ENCODE measurements at regions of chr2 and their contacts with region 1.

Region 1: GRCh38 chr2:26959331-26959730 is 11.1 kb upstream of the MAPRE3 start:
- DNase-seq: no peak
- H3K4me3 ChIP-seq: no peak overlapping the region
- H3K27ac ChIP-seq: no peak overlapping the region
- H3K4me1 ChIP-seq: no peaks in the 10 kb centered on the region
- H3K27me3 ChIP-seq: peaks cover 19 to 33% of the 10 kb centered on the region in 2 experiments
- CTCF ChIP-seq: no peak
- POLR2A ChIP-seq: no peak

Region 2: GRCh38 chr2:26982102-26982742 is 22.9 kb after region 1 on chr2:
- CTCF ChIA-PET with region 1: interaction called, 16 read pairs
- POLR2A ChIA-PET with region 1: no interaction called
- dilution Hi-C with region 1: no loop called
- intact Hi-C with region 1: no loop called
- DNase-seq: peak; percentile 72
- H3K4me3 ChIP-seq: no peak overlapping the region
- H3K27ac ChIP-seq: no peak overlapping the region
- H3K4me1 ChIP-seq: no peaks in the 10 kb centered on the region
- H3K27me3 ChIP-seq: peaks cover 6 to 7% of the 10 kb centered on the region in 2 experiments
- CTCF ChIP-seq: peak; percentile 21 to 50
- POLR2A ChIP-seq: no peak

Region 3: DNA sequence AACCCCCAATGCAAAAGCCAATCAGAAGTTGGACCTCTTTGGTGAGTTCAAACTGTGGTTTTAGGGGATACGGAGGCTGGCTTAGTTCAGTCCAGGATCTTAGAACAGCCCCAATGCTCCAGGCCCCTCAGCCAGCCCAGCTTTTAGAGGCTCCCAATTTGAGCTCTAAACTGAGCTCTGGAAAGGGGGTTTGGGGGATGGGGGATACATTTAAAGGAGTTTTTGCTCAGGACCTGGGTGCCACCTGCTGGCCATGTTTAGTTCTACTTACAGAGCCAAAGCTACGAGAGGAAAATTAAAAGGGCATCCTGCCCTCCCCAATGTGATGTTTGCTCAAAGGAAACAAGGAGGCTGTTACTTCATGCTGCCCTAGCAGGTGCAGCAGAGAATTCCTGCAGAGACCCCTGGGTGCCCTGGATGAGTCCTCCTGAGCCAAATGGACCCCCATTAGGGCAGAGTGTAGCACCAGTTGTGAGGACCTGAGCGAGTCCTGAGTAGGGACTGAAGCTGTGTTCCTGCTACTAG is 57.5 kb after region 1 on chr2:
- CTCF ChIA-PET with region 1: interaction called, 355 read pairs
- POLR2A ChIA-PET with region 1: no interaction called
- dilution Hi-C with region 1: no loop called
- intact Hi-C with region 1: loop called (anchors 1 kb)
- DNase-seq: peak; percentile 63
- H3K4me3 ChIP-seq: no peak overlapping the region
- H3K27ac ChIP-seq: no peak overlapping the region
- H3K4me1 ChIP-seq: peaks cover 13% of the 10 kb centered on the region
- H3K27me3 ChIP-seq: no peaks in the 10 kb centered on the region
- CTCF ChIP-seq: peak; percentile 68 to 70
- POLR2A ChIP-seq: no peak

Region 4: DNA sequence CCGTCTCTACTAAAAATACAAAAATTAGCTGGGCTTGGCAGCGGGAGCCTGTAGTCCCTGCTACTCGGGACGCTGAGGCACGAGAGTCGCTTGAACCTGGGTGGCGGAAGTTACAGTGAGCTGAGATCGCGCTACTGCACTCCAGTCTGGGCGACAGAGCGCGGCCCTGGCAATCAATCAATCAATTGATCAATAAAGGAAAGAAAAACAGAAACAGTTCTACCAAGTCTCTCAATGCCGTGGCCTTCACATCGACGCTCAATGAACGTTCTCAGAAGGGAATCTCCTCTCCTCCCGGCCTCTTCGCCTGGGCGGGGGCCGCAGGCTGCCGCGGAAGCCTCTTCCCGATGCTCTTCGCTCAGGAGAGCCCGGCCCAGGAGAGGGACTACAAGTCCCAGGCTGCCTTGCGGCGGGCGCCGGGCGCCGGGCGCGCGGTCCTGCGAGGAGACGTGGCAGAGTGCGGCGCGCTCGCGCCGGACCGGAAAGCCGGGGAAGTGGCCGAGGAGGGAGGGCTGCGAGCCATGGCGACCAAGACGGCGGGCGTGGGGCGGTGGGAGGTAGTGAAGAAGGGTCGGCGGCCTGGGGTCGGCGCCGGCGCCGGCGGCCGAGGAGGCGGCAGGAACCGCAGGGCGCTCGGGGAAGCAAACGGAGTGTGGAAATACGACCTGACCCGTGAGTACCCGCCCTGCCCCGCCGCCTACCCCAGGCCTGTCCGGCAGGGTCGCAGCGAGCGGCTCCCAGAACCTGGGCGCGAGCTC is 73.3 kb after region 1 on chr2 and contains the start of gene TMEM214:
- CTCF ChIA-PET with region 1: interaction called, 30 read pairs
- POLR2A ChIA-PET with region 1: interaction called, 4 read pairs
- dilution Hi-C with region 1: no loop called
- intact Hi-C with region 1: no loop called
- DNase-seq: peak; percentile 87
- H3K4me3 ChIP-seq: peak within 1 kb of the TSS; percentile 76 to 91 (median 79)
- H3K27ac ChIP-seq: peak within 1 kb of the TSS; percentile 58
- H3K4me1 ChIP-seq: peaks cover 13% of the 10 kb centered on the region
- H3K27me3 ChIP-seq: no peaks in the 10 kb centered on the region
- CTCF ChIP-seq: no peak
- POLR2A ChIP-seq: peak; percentile 80
- total RNA-seq, gene TMEM214: 107 and 109 TPM in 2 replicates

Region 5: DNA sequence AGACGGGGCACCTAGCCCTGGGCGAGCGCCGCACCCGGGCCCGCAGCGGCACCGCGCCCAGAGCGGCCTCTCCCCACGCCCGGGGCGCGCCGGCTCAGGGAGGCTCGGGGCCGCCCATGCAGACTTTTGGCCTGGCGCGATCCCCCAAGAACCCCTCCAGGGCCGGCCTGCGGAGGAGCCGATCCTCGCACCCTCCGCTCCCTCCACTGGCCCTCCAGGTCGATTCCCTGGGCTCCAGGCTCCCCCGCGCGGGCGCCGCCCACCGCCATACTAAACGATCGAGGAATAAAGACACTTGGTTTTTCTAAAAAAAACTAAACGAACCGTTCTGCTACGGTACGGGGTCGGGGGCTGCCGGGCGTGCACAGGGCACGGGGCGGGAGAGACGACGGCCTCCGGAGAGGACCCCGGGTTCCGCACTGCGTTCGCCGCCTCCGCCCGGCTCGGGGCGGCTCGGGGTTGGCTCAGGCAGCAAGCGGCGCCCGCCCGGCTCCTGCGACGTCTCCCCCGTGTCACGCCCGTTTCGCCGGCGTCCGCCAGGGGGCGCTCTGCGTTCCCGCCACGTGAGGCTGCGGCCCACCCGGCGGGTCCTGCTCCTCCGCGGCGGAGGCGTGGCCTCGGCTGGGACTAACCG is 126.9 kb after region 1 on chr2:
- CTCF ChIA-PET with region 1: interaction called, 55 read pairs
- POLR2A ChIA-PET with region 1: no interaction called
- dilution Hi-C with region 1: no loop called
- intact Hi-C with region 1: loop called (anchors 1 kb)
- DNase-seq: peak; percentile 94
- H3K4me3 ChIP-seq: peak overlapping the region; percentile 55 to 73 (median 64)
- H3K27ac ChIP-seq: peak overlapping the region; percentile 51
- H3K4me1 ChIP-seq: peaks cover 12% of the 10 kb centered on the region
- H3K27me3 ChIP-seq: no peaks in the 10 kb centered on the region
- CTCF ChIP-seq: peak; percentile 76 to 86
- POLR2A ChIP-seq: peak; percentile 62